ENCODE measurements at regions of chr1 and their contacts with region 1.

Region 1: DNA sequence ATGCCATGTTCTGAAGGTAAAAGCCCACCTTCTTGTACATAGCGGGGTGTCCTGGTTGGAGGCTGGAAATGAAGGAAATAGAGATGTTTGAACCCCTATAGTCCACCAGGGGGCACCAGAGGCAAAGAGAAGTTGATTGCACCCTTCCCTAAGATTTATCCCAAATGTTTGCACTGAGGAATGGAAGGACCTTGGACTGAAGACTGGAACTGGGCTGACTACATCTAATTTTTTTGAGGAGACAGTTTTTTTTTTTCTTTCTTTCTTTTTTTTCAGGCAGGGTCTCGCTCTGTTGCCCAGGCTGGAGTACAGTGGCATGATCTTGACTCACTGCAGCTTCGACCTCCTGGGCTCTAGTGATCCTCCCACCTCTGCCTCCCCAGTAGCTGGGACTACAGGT is 55.3 kb upstream of the EIF4G3 start:
- DNase-seq: no peak
- H3K4me3 Mint-ChIP-seq: no peak overlapping the region
- H3K27ac Mint-ChIP-seq: no peak overlapping the region
- H3K4me1 Mint-ChIP-seq: no peaks in the 10 kb centered on the region
- H3K27me3 Mint-ChIP-seq: no peaks in the 10 kb centered on the region

Region 2: DNA sequence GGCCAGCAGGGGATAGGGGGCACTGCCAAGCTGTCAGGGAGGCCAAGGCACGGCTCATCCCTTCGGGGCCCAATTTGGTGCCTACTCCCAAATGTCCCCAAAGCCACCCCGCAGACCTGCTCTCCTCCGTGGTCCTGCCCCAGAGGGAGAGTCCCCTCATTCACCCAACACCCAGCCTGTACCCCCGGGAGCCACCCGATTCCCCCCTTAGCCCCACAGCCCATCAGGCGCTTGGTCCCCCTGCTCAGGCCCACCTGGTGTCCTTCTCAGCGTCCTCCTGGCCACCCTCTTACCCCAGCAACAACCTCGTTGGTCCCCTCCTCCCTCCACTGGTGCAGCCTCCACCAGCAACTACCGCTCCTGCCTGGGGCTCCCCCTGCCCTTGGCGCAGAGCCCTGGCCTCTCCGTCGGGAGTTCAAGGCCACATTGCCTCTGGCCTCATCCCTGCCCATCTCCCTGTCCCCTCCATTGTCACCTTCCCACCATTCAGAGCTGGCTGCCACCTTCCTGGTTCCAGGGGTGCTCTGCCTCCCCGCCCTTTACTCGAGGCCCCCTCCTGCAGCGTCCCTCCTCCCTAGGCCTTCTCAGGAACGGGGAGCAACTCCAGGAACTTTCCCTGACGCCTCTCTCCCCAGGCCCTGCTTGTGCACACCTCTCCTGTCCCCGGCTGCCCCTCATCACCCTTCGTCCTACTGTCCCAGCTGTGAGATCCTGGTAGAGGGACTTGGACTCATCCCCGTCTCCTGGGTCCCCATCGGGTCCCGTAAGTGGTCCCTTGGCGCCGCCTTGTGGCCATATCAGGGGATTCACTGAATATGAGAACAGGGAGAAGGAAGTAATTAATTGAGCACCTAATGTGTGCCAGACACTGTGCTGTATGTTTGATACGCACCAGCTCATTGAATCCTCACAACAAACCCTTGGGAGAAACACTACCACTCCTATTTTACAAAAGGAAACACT is 363.2 kb after region 1 on chr1:
- intact Hi-C with region 1: loop called (anchors 5 kb)
- DNase-seq: peak; percentile 34
- H3K4me3 Mint-ChIP-seq: no peak overlapping the region
- H3K27ac Mint-ChIP-seq: no peak overlapping the region
- H3K4me1 Mint-ChIP-seq: no peaks in the 10 kb centered on the region
- H3K27me3 Mint-ChIP-seq: peaks cover 4% of the 10 kb centered on the region

Measured in activated T-helper 2 cell treated with anti-CD3 and anti-CD28 coated beads, Interferon-gamma antibody, Interleukin-2, Interleukin-4, amounts not matched to agents 10 μg/mL and 5 μg/mL and 100 μg/mL, durations not matched to agents 14 hours and 24 hours and 36 hours (primary cell).